ENCODE measurements at regions of chr5 and their contacts with region 1.

Region 1: DNA sequence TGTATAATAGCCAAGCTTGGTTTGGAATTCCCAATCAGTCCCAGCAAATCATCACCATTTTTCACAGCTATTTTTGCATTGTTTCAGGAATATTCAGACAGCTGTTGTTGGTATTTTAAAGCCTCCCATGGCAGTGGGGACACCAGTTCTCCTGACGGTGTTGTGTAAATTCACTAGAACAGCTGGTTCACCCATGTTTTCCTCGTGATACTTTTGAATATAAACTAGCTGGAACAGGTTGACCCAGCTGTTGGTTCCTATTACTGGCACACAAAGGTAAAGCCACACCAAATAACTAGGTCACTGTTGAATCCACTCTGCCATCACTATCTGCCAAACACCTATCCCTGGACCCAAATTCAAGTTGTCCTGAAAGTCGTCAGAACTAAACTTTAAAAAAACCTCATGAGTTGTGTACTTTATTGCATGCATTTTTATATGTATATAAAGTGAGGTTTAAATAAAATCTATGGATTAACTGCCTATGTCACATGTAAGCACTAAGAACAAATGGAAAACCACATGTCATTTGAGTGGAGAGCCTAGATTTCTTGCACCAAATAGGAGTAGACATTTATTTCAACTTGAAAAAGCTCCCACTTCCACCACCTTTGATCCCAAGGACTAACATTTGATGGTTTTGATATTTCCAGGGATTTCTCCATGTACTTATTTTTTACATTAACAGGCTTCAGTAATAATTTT is 121.9 kb upstream of the PIK3R1 start:
- DNase-seq: no peak
- H3K4me3 ChIP-seq: no peak overlapping the region
- H3K27me3 ChIP-seq: no peaks in the 10 kb centered on the region
- CTCF ChIP-seq: no peak

Region 2: GRCh38 chr5:68071736-68072135 is 21.9 kb before region 1 on chr5:
- CTCF ChIA-PET with region 1: no interaction called
- POLR2A ChIA-PET with region 1: interaction called, 10 read pairs
- DNase-seq: no peak
- H3K4me3 ChIP-seq: no peak overlapping the region
- H3K27me3 ChIP-seq: no peaks in the 10 kb centered on the region
- CTCF ChIP-seq: no peak